ENCODE measurements at regions of chr2 and their contacts with region 1.

Region 1: DNA sequence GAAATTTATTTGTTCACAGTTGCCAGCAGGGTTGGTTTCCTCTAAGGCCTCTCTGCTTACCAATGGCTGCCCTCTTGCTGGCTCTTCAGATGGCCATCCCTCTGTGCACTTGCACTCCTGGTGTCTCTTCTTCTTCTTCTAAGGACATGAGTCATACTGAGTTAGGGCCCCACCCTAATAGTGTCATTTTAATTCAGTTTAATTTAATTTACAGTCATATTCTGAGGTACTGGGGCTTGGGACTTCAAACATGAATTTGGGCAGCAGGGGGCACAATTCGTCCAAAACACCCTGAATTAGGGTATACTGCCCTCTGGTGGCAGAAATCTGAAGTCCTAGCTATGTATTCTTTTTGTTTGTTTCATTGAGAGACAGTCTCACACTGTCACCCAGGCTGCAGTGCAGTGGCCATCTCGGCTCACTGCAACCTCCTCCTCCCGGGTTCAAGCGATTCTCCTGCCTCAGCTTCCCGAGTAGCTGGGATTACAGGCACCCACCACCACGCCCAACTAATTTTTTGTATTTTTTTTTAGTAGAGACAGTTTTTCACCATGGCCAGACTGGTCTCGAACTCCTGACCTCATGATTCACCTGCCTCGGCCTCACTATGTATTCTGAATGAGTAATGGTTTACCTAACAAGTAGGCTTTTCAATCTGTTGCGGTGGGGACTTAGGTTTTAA is 19.8 kb downstream of the SLC4A1AP start:
- DNase-seq: peak; percentile 90
- H3K4me3 Mint-ChIP-seq: no peak overlapping the region
- H3K27ac Mint-ChIP-seq: peak overlapping the region; percentile 90
- H3K4me1 Mint-ChIP-seq: peaks cover 47% of the 10 kb centered on the region
- H3K27me3 Mint-ChIP-seq: no peaks in the 10 kb centered on the region

Region 2: GRCh38 chr2:27370026-27370815 is 313.3 kb before region 1 on chr2 and contains the starts of genes EIF2B4 and SNX17:
- CTCF ChIA-PET with region 1: interaction called, 14 read pairs
- POLR2A ChIA-PET with region 1: no interaction called
- DNase-seq: peak; percentile 100
- H3K4me3 Mint-ChIP-seq: peak within 1 kb of the TSS; percentile 88
- H3K27ac Mint-ChIP-seq: peak within 1 kb of the TSS; percentile 93
- H3K4me1 Mint-ChIP-seq: peaks cover 45% of the 10 kb centered on the region
- H3K27me3 Mint-ChIP-seq: no peaks in the 10 kb centered on the region
- total RNA-seq, gene EIF2B4: 34.1 to 36.9 TPM
- total RNA-seq, gene SNX17: 116 to 123 TPM

Region 3: GRCh38 chr2:27409321-27410073 is 274.0 kb before region 1 on chr2 and contains the start of gene PPM1G:
- CTCF ChIA-PET with region 1: interaction called, 11 read pairs
- POLR2A ChIA-PET with region 1: interaction called, 11 read pairs
- DNase-seq: peak; percentile 97
- H3K4me3 Mint-ChIP-seq: peak within 1 kb of the TSS; percentile 82
- H3K27ac Mint-ChIP-seq: peak within 1 kb of the TSS; percentile 74
- H3K4me1 Mint-ChIP-seq: peaks cover 45% of the 10 kb centered on the region
- H3K27me3 Mint-ChIP-seq: peaks cover 4% of the 10 kb centered on the region
- total RNA-seq, gene PPM1G: 119 to 122 TPM

Region 4: GRCh38 chr2:27489498-27490397 is 193.8 kb before region 1 on chr2 and contains the start of gene IFT172:
- CTCF ChIA-PET with region 1: interaction called, 11 read pairs
- POLR2A ChIA-PET with region 1: no interaction called
- DNase-seq: peak; percentile 100
- H3K4me3 Mint-ChIP-seq: peak within 1 kb of the TSS; percentile 74
- H3K27ac Mint-ChIP-seq: peak within 1 kb of the TSS; percentile 71
- H3K4me1 Mint-ChIP-seq: peaks cover 30% of the 10 kb centered on the region
- H3K27me3 Mint-ChIP-seq: peaks cover 14% of the 10 kb centered on the region
- total RNA-seq, gene IFT172: 7.9 to 9.9 TPM

Region 5: DNA sequence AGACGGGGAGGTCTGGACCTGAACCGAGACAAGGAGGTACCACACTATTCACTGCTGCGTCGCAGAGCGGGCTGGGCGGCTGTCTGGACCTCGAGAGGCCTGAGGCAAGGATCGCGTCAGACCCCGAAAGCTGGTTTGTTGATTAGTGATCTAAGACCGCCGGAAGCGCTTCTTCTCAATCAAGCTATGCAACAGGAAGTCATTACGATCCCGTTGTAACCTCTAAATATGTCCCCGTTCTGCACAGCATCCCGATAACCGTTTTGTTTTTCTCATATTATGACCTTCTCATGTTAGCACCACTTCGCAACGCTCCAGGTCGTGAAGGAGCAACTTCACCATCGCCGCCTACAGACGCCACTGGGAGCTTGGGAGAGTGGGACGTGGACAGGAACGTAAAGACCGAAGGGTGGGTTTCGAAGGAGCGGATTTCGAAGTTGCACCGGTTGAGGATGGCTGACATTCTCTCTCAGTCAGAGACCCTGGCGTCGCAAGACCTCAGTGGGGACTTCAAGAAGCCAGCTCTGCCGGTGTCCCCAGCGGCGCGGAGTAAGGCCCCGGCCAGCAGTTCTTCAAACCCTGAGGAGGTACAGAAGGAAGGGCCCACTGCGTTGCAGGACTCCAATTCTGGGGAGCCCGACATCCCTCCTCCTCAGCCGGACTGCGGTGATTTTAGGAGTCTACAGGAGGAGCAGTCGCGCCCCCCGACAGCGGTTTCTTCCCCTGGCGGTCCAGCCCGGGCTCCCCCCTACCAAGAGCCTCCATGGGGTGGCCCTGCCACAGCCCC is 19.9 kb before region 1 on chr2 and contains the starts of genes SLC4A1AP and SUPT7L:
- CTCF ChIA-PET with region 1: interaction called, 36 read pairs
- POLR2A ChIA-PET with region 1: interaction called, 21 read pairs
- DNase-seq: peak; percentile 78
- H3K4me3 Mint-ChIP-seq: peak within 1 kb of the TSS; percentile 99
- H3K27ac Mint-ChIP-seq: peak within 1 kb of the TSS; percentile 100
- H3K4me1 Mint-ChIP-seq: peaks cover 60% of the 10 kb centered on the region
- H3K27me3 Mint-ChIP-seq: no peaks in the 10 kb centered on the region
- total RNA-seq, gene SLC4A1AP: 27.3 to 27.9 TPM
- total RNA-seq, gene SUPT7L: 36.5 to 37.2 TPM

Region 6: GRCh38 chr2:27697660-27698059 is 14.1 kb after region 1 on chr2:
- CTCF ChIA-PET with region 1: interaction called, 46 read pairs
- POLR2A ChIA-PET with region 1: interaction called, 4 read pairs
- DNase-seq: no peak
- H3K4me3 Mint-ChIP-seq: no peak overlapping the region
- H3K27ac Mint-ChIP-seq: peak overlapping the region; percentile 56
- H3K4me1 Mint-ChIP-seq: peaks cover 30% of the 10 kb centered on the region
- H3K27me3 Mint-ChIP-seq: no peaks in the 10 kb centered on the region

Measured in activated CD4-positive, alpha-beta memory T cell treated with anti-CD3 and anti-CD28 coated beads, Interleukin-2, amount 10 ng/mL, durations not matched to agents 7 days and 5 days (primary cell).